ENCODE measurements at regions of chr2 and their contacts with region 1.

Region 1: GRCh38 chr2:18749912-18750526 is 160.7 kb upstream of the NT5C1B start:
- DNase-seq: peak; percentile 65
- ATAC-seq: 0 out of 3 replicates have a peak, but pooled peaks have one; percentile 19
- H3K4me3 ChIP-seq: no peak overlapping the region
- H3K27ac ChIP-seq: no peak overlapping the region
- H3K4me1 ChIP-seq: peaks cover 21% of the 10 kb centered on the region
- H3K27me3 ChIP-seq: no peaks in the 10 kb centered on the region
- CTCF ChIP-seq: peak; percentile 72
- EP300 ChIP-seq: no peak
- POLR2A ChIP-seq: no peak
- RAD21 ChIP-seq: peak; percentile 58; the same call in 1 of the 2 replicates

Region 2: GRCh38 chr2:18500333-18500732 is 249.7 kb before region 1 on chr2:
- CTCF ChIA-PET with region 1: no interaction called
- POLR2A ChIA-PET with region 1: no interaction called
- in situ Hi-C with region 1: no loop called
- intact Hi-C with region 1: no loop called
- DNase-seq: no peak
- ATAC-seq: no peak
- H3K4me3 ChIP-seq: no peak overlapping the region
- H3K27ac ChIP-seq: no peak overlapping the region
- H3K4me1 ChIP-seq: peaks cover 14% of the 10 kb centered on the region
- H3K27me3 ChIP-seq: peaks cover 0 to 4% of the 10 kb centered on the region in 2 experiments; a peak in 1 of 5 replicates
- CTCF ChIP-seq: no peak
- EP300 ChIP-seq: no peak
- POLR2A ChIP-seq: no peak
- RAD21 ChIP-seq: no peak

Region 3: GRCh38 chr2:18520451-18521425 is 229.3 kb before region 1 on chr2:
- CTCF ChIA-PET with region 1: no interaction called
- POLR2A ChIA-PET with region 1: no interaction called
- in situ Hi-C with region 1: loop called (anchors 5 kb)
- intact Hi-C with region 1: loop called (anchors 1 kb)
- DNase-seq: peak; percentile 71
- ATAC-seq: peak; percentile 96
- H3K4me3 ChIP-seq: no peak overlapping the region
- H3K27ac ChIP-seq: no peak overlapping the region
- H3K4me1 ChIP-seq: no peaks in the 10 kb centered on the region
- H3K27me3 ChIP-seq: peaks cover 2 to 11% of the 10 kb centered on the region in 2 experiments; a peak in 4 of 5 replicates
- CTCF ChIP-seq: peak; percentile 93
- EP300 ChIP-seq: no peak
- POLR2A ChIP-seq: no peak
- RAD21 ChIP-seq: peak; percentile 95

Region 4: DNA sequence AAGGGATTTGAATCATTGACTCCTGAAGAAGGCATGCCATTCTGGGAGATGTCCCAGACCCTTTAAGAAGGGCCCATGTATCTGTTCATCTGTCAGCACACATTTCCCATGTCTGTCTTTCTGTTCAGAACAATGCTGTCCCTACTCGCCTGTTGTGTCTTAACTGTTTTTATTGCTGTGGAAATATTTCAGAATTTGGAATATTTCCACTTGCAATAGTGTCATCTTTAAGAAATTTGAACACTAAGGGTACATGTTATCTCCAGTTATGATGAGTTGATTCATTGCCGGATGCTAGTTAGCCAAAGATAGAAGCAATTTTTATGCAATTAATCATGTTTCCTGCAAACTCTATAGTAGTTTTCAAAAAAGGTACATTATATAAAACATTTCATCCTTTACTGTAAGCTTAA is 123.8 kb before region 1 on chr2:
- CTCF ChIA-PET with region 1: no interaction called
- POLR2A ChIA-PET with region 1: no interaction called
- in situ Hi-C with region 1: no loop called
- intact Hi-C with region 1: no loop called
- DNase-seq: no peak
- ATAC-seq: no peak
- H3K4me3 ChIP-seq: no peak overlapping the region
- H3K27ac ChIP-seq: no peak overlapping the region
- H3K4me1 ChIP-seq: no peaks in the 10 kb centered on the region
- H3K27me3 ChIP-seq: no peaks in the 10 kb centered on the region
- CTCF ChIP-seq: no peak
- EP300 ChIP-seq: no peak
- POLR2A ChIP-seq: no peak
- RAD21 ChIP-seq: no peak

Region 5: DNA sequence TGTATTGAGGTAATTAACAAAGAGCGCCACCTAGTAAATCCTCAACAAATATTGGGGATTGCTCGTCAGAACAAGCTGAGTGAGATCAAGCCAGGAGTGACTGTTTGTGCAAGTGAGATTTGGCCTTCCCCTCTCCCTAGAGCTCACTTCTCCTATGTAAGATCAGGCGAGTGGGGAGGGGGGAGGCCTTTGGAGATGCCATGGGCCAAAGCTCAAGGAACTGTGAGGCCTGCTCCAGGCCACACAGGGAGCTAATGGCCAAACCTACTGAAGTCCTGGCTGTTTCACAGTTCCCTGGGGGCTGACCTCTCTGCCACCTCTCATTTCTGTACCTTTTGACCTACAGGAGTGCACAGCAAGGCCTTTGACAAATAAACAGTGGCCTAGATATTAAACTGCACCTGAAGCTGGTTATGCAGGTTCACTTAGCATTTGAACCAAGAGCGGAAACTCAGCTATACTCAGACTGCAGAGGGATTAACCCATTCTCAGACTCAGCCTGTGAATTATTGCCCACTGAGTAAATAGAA is 74.3 kb after region 1 on chr2:
- CTCF ChIA-PET with region 1: no interaction called
- POLR2A ChIA-PET with region 1: no interaction called
- in situ Hi-C with region 1: no loop called
- intact Hi-C with region 1: loop called (anchors 1 kb)
- DNase-seq: peak; percentile 76
- ATAC-seq: peak; percentile 95
- H3K4me3 ChIP-seq: no peak overlapping the region
- H3K27ac ChIP-seq: no peak overlapping the region
- H3K4me1 ChIP-seq: peaks cover 24% of the 10 kb centered on the region
- H3K27me3 ChIP-seq: no peaks in the 10 kb centered on the region
- CTCF ChIP-seq: peak; percentile 46
- EP300 ChIP-seq: no peak
- POLR2A ChIP-seq: no peak
- RAD21 ChIP-seq: no peak

Region 6: GRCh38 chr2:19046986-19047780 is 297.2 kb after region 1 on chr2:
- CTCF ChIA-PET with region 1: no interaction called
- POLR2A ChIA-PET with region 1: no interaction called
- in situ Hi-C with region 1: no loop called
- intact Hi-C with region 1: loop called (anchors 1 kb)
- DNase-seq: no peak
- ATAC-seq: no peak
- H3K4me3 ChIP-seq: no peak overlapping the region
- H3K27ac ChIP-seq: no peak overlapping the region
- H3K4me1 ChIP-seq: peaks cover 26% of the 10 kb centered on the region
- H3K27me3 ChIP-seq: no peaks in the 10 kb centered on the region
- CTCF ChIP-seq: no peak
- EP300 ChIP-seq: no peak
- POLR2A ChIP-seq: no peak
- RAD21 ChIP-seq: no peak

Region 7: GRCh38 chr2:19312949-19313348 is 562.9 kb after region 1 on chr2:
- CTCF ChIA-PET with region 1: interaction called, 4 read pairs
- POLR2A ChIA-PET with region 1: no interaction called
- in situ Hi-C with region 1: no loop called
- intact Hi-C with region 1: loop called (anchors 1 kb)
- DNase-seq: peak; percentile 51
- ATAC-seq: peak; percentile 98
- H3K4me3 ChIP-seq: no peak overlapping the region
- H3K27ac ChIP-seq: no peak overlapping the region
- H3K4me1 ChIP-seq: peaks cover 14% of the 10 kb centered on the region
- H3K27me3 ChIP-seq: no peaks in the 10 kb centered on the region
- CTCF ChIP-seq: no peak
- EP300 ChIP-seq: no peak
- POLR2A ChIP-seq: no peak
- RAD21 ChIP-seq: no peak

Region 8: GRCh38 chr2:19863303-19864041 is 1113.5 kb after region 1 on chr2:
- CTCF ChIA-PET with region 1: interaction called, 19 read pairs
- POLR2A ChIA-PET with region 1: no interaction called
- in situ Hi-C with region 1: loop called (anchors 10 kb)
- intact Hi-C with region 1: loop called (anchors 1 kb)
- DNase-seq: peak; percentile 76
- ATAC-seq: peak; percentile 96
- H3K4me3 ChIP-seq: peak overlapping the region; percentile 46 to 77 (median 57)
- H3K27ac ChIP-seq: peak overlapping the region; percentile 26
- H3K4me1 ChIP-seq: peaks cover 36% of the 10 kb centered on the region
- H3K27me3 ChIP-seq: peaks cover 2 to 18% of the 10 kb centered on the region in 2 experiments; a peak in 3 of 5 replicates
- CTCF ChIP-seq: peak; percentile 100
- EP300 ChIP-seq: no peak
- POLR2A ChIP-seq: peak in 1 of 2 experiments; percentile 60; a peak in 2 of 4 replicates
- RAD21 ChIP-seq: peak; percentile 100